ENCODE measurements at regions of chr2 and their contacts with region 1.

Region 1: DNA sequence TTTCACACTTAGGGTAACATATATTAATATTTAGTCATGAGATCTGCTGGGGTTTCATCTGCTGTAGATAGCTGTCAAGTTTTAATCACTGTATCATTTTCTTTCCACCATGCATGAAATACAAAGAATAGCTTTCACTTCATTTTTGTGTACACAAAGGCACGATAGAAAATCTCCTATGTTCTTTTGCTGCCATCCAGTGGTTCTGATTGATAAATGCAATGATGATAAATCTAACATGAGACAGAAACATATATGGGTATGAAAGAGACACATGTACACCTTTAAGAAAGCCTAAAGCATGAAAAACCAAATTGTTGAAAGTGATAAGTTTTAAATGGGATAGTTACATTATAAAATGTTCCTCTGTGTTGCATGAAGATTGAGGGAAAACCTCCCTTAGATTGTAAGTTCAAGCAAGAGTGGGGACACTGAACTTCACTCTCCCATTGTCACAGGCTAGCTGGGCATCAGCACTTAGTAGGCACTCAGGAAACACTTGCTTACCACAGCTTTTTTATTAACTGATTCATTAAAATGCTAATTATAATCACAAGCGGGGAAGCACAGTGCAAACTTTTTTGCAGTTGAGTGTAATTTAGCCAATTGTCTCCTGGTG is 31.2 kb downstream of the C1D start:
- DNase-seq: peak; percentile 79
- H3K4me3 ChIP-seq: no peak overlapping the region
- H3K27ac ChIP-seq: no peak overlapping the region
- H3K4me1 ChIP-seq: peaks cover 6% of the 10 kb centered on the region
- H3K27me3 ChIP-seq: no peaks in the 10 kb centered on the region
- CTCF ChIP-seq: peak; percentile 19 to 34
- POLR2A ChIP-seq: no peak

Region 2: GRCh38 chr2:66574701-66575624 is 1456.7 kb before region 1 on chr2:
- CTCF ChIA-PET with region 1: interaction called, 10 read pairs
- POLR2A ChIA-PET with region 1: no interaction called
- dilution Hi-C with region 1: no loop called
- intact Hi-C with region 1: loop called (anchors 5 kb)
- DNase-seq: peak; percentile 81
- H3K4me3 ChIP-seq: peak overlapping the region; percentile 56 to 92 (median 85)
- H3K27ac ChIP-seq: peak overlapping the region; percentile 74
- H3K4me1 ChIP-seq: peaks cover 18% of the 10 kb centered on the region
- H3K27me3 ChIP-seq: peaks cover 32 to 38% of the 10 kb centered on the region in 2 experiments
- CTCF ChIP-seq: peak; percentile 45 to 60
- POLR2A ChIP-seq: no peak

Region 3: DNA sequence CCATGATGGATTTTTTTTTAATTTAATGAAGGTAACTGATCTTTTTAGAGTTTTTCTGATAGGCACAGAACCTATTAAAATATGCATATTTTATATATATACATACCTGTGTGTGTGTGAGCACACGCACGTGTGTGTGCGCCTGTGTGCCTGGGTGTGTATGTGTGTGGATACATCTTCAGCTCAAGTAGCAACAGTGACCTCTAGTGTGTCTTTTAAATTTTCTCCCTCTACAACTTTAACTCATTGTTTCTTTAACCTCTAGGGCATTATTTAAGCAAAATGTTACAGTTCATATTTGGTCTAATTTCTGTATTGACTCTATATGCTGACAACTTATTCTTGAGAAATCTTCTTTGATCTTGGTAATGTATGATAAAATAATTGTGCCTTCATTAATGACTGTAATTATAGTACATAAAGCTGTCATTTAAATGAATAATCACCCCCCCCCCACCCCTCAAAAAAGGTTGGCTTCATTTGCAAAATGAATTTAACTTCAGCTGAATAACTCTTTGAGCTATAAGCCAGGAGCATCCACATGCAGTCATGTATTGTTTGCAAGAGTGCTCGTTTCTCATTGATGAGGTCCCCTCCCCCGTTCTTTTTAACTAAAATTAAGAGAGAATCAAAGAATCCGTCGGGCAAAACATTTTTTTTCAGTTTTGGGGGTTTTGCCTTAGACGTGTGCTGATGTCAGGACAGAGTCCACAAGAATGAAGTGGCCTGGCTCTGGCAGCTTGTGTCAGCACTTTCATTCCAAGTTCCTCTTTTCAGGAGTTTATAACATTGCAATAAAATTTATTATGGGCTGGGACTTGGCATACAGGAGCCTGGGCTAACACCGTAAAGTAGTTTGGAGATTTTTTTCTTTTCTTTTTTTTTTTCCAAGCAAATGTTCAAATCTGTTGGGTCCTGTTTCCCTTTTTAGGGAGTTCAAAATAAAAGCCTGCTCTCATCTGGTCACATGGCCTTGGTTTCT is 554.6 kb before region 1 on chr2:
- CTCF ChIA-PET with region 1: interaction called, 16 read pairs
- POLR2A ChIA-PET with region 1: no interaction called
- dilution Hi-C with region 1: no loop called
- intact Hi-C with region 1: loop called (anchors 1 kb)
- DNase-seq: peak; percentile 68
- H3K4me3 ChIP-seq: no peak overlapping the region
- H3K27ac ChIP-seq: no peak overlapping the region
- H3K4me1 ChIP-seq: no peaks in the 10 kb centered on the region
- H3K27me3 ChIP-seq: no peaks in the 10 kb centered on the region
- CTCF ChIP-seq: peak; percentile 39 to 40
- POLR2A ChIP-seq: no peak

Region 4: DNA sequence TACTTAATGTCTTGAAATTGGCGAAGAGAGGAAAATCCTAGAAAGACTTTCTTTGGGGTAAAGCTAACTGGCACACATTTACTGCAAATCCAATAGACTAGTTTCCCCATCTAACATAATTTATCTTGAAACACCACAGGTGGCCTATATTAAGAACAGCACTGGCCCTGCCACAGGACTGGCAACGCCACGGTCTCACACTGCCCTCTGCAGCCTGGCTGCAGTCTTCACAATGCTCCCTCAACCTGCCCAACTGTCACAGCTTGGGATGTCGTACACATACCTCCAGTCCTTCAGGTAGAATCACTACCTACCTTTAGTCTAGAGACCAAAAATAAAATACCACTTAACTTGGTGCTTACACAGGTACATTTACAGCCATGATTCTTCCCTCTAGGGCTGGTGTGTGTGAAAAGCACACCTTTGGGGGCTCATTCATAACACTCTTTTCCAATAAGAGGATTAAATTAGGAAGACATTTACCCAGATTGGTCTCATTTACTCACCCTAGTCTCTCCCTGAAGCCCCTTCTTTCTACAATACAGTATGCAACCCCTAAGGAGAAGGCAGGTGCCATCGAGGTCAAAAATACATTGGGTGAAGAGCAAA is 191.1 kb before region 1 on chr2:
- CTCF ChIA-PET with region 1: interaction called, 82 read pairs
- POLR2A ChIA-PET with region 1: interaction called, 3 read pairs
- dilution Hi-C with region 1: no loop called
- intact Hi-C with region 1: loop called (anchors 1 kb)
- DNase-seq: peak; percentile 80
- H3K4me3 ChIP-seq: no peak overlapping the region
- H3K27ac ChIP-seq: no peak overlapping the region
- H3K4me1 ChIP-seq: peaks cover 8% of the 10 kb centered on the region
- H3K27me3 ChIP-seq: no peaks in the 10 kb centered on the region
- CTCF ChIP-seq: peak; percentile 79 to 89
- POLR2A ChIP-seq: no peak

Region 5: GRCh38 chr2:67880291-67880761 is 151.3 kb before region 1 on chr2:
- CTCF ChIA-PET with region 1: interaction called, 11 read pairs
- POLR2A ChIA-PET with region 1: no interaction called
- dilution Hi-C with region 1: no loop called
- intact Hi-C with region 1: no loop called
- DNase-seq: no peak
- H3K4me3 ChIP-seq: no peak overlapping the region
- H3K27ac ChIP-seq: no peak overlapping the region
- H3K4me1 ChIP-seq: no peaks in the 10 kb centered on the region
- H3K27me3 ChIP-seq: no peaks in the 10 kb centered on the region
- CTCF ChIP-seq: no peak
- POLR2A ChIP-seq: no peak

Region 6: DNA sequence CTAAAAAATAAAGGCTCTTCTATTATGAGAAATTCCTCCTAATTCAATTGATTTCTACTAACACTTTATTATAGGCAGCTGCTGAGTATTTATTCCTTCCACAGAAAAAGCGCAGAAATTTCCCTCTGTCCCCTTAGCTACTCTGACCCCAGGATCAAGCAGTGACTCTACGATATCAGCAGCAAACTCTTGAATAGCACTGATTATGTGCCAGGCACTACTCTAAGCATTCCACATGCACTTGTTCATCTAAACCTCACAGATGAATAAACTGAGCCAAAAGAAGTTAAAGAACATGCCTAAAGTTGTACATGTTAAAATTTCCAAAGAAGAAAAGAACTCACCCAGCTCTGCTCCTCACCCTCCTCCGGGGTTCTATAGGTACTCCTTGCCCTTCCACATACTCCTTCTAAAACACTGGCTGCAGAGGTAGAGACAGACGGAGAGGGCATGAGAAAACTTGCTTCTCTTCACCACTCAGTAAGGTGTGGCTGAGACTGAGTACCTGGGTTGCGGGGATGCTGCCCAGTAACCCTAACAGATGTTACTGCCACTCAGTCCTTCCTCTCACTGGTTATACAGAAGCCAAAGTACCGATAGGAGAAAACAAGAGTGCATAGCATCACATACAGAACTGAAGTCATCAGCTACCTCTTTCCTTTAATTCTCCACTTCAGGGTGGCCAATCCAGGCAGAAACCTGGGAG is 21.2 kb after region 1 on chr2:
- CTCF ChIA-PET with region 1: no interaction called
- POLR2A ChIA-PET with region 1: no interaction called
- dilution Hi-C with region 1: no loop called
- intact Hi-C with region 1: no loop called
- DNase-seq: no peak
- H3K4me3 ChIP-seq: no peak overlapping the region
- H3K27ac ChIP-seq: no peak overlapping the region
- H3K4me1 ChIP-seq: no peaks in the 10 kb centered on the region
- H3K27me3 ChIP-seq: no peaks in the 10 kb centered on the region
- CTCF ChIP-seq: no peak
- POLR2A ChIP-seq: no peak